IMR-90 (cell line): ENCODE measurements at regions of chr11 and their contacts with region 1.

Region 1: DNA sequence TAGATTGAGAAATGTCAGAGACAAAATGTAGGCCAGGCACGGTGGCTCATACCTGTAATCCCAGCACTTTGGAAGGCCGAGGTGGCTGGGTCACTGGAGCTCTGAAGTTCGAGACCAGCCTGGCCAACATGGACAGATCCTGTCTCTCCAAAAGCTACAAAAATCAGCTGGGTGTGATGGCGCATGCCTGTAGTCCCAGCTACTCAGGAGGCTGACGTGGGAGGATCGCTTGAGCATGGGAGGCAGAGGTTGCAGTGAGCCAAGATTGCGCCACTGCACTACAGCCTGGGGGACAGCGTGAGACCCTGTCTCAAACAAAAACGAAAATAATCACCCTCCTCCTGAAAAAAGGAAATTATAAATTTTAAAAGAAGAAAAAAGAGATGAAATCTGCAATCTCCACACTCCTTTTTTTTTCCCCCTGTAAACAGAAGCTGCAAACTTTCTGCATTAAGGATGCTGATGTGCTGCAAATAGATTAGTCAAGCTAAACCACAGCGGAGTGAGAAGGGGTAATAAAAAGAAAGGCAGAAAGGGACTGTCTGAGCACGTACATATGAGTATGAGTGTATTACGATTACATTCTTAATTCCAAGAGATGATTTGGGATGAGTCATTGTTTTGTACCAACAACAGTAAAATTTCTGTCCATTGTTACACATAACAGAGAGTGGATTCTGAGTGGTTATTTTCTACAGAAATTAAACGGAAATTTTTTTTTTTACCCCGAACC is 87.3 kb downstream of the SIK3 start:
- DNase-seq: peak; percentile 92
- ATAC-seq: peak; percentile 95
- H3K4me3 ChIP-seq: no peak overlapping the region
- H3K27ac ChIP-seq: peak overlapping the region; percentile 20; the same call in 1 of the 2 replicates
- H3K4me1 ChIP-seq: peaks cover 8% of the 10 kb centered on the region
- H3K27me3 ChIP-seq: no peaks in the 10 kb centered on the region
- CTCF ChIP-seq: no peak
- POLR2A ChIP-seq: no peak
- RAD21 ChIP-seq: no peak

Region 2: DNA sequence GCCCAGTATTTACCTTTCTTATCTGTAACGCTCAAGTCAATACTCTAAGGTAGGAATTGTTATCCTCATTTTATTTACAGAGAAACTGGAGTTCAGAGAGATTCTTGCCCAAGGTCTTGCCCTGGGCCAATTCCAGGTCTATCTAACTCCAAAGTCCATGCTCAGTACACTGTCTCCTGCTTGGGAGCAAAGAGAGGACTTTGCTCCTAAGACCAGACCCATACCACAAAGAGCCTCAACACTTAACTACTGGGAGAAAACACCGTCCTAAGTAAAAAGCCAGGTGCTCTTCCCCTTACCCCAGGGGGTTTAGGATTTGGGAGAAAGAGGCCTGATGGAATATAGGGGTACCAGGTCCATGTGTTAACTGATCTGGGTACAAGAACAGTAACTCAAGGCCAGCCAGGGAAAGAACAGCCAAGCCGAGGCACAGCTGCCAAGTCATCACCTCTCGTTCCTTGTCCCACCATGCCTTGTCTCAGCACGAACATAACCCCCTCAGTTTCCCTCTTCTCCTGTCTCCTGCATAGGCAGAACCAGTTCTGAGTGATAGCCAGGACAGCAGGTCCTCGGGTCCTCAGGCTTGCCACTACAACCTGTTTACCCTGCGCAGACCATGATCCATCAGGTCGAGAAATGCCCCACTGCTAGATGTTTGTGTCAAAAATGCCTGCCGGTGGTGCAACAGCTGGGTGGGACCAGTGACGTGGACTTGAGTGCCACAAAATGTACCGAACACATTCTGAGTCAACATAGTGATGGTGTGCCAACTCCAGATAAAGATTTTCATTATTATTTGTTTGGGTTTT is 202.4 kb before region 1 on chr11:
- CTCF ChIA-PET with region 1: no interaction called
- POLR2A ChIA-PET with region 1: interaction called, 12 read pairs
- dilution Hi-C with region 1: no loop called
- in situ Hi-C with region 1: no loop called
- intact Hi-C with region 1: no loop called
- DNase-seq: peak; percentile 32
- ATAC-seq: 0 out of 2 replicates have a peak, but pooled peaks have one; percentile 24
- H3K4me3 ChIP-seq: no peak overlapping the region
- H3K27ac ChIP-seq: no peak overlapping the region
- H3K4me1 ChIP-seq: no peaks in the 10 kb centered on the region
- H3K27me3 ChIP-seq: peaks cover 5% of the 10 kb centered on the region
- CTCF ChIP-seq: no peak
- POLR2A ChIP-seq: no peak
- RAD21 ChIP-seq: no peak

Region 3: DNA sequence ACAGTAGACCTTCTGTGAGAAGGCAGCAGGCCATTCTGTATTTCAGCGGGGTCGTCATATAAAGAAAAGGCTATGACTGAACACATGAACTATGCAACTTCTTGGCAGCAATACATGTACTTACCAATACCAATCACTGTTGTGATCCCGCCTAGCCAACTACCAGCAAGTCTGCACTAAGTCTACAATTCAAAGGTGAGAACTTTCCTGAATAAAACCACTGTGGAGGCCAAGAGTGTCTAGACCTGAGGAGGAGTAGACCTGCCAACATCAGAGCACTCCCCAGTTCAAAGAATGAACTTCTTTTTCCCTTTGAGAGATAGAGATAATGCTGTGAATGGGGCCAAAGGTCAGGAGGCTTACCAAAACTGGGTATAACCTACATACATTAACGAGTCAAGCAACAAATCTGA is 20.9 kb before region 1 on chr11:
- CTCF ChIA-PET with region 1: no interaction called
- POLR2A ChIA-PET with region 1: no interaction called
- dilution Hi-C with region 1: no loop called
- in situ Hi-C with region 1: no loop called
- intact Hi-C with region 1: loop called (anchors 2 kb)
- DNase-seq: peak; percentile 92
- ATAC-seq: peak; percentile 78
- H3K4me3 ChIP-seq: no peak overlapping the region
- H3K27ac ChIP-seq: no peak overlapping the region
- H3K4me1 ChIP-seq: peaks cover 6% of the 10 kb centered on the region
- H3K27me3 ChIP-seq: no peaks in the 10 kb centered on the region
- CTCF ChIP-seq: no peak
- POLR2A ChIP-seq: no peak
- RAD21 ChIP-seq: no peak